Heart left ventricle (tissue), 16 donors: ENCODE measurements at regions of chr15 and their contacts with region 1.

Region 1: GRCh38 chr15:35674873-35675781 is 129.2 kb upstream of the DPH6 start:
- DNase-seq: no peak
- ATAC-seq: peak in 3 of 4 donors; percentile 13 to 43 (median 38)
- H3K4me3 ChIP-seq: no peak overlapping the region
- H3K27ac ChIP-seq: peak overlapping the region; percentile 16 to 70 (median 59)
- H3K4me1 ChIP-seq: peaks cover 11 to 49% (median 38%) of the 10 kb centered on the region in 12 donors
- H3K27me3 ChIP-seq: no peaks in the 10 kb centered on the region
- CTCF ChIP-seq: no peak
- POLR2A ChIP-seq: no peak

Region 2: DNA sequence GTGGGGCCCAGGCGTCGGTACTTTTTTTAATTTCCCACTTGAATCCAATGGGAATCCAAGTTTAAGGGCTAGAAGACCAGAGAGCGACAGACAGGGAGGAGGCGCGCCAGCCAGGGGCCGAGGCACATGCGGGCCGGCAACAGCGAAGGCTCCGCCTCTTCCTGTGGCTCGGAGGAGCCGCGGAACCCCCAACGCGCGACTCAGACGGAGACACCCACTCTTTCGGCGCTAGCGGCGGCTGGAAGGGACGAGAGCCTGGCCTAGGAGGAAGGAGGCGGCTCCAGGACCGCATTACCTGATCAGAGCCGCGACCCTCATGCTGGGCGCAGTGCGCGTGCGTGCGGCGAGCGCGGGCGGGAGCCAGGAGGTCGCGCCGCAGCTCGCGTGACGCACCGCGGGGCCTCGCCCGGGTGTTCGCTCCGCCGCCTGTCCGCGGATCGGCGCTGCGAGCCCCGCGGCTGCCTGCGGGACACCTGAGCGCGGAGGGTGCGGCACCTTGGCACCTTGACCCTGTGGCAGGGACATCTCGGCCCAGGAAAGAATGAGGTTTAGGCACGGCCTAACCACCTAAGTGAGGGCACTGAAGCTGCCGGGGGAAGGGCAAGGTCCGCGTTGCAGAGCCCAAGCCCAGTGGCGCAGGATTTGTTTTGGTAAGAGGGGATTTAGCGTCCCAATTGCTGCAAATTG is 129.2 kb before region 1 on chr15 and contains the start of gene DPH6:
- intact Hi-C with region 1: loop called in 1 of 10 experiments (anchors 5 kb)
- DNase-seq: peak; percentile 85 to 93 (median 90)
- ATAC-seq: peak; percentile 92 to 96 (median 95)
- H3K4me3 ChIP-seq: peak within 1 kb of the TSS; percentile 62 to 97 (median 80)
- H3K27ac ChIP-seq: peak within 1 kb of the TSS; percentile 96 to 100 (median 99)
- H3K4me1 ChIP-seq: peaks cover 0 to 25% (median 16%) of the 10 kb centered on the region in 12 donors
- H3K27me3 ChIP-seq: no peaks in the 10 kb centered on the region
- CTCF ChIP-seq: peak in 5 of 12 donors; percentile 10 to 32 (median 18)
- POLR2A ChIP-seq: peak in 1 of 2 donors; percentile 85
- total RNA-seq, gene DPH6: 7.7 to 24.8 (median 16.0) TPM